Heart right ventricle (tissue), 16 donors: ENCODE measurements at regions of chr7 and their contacts with region 1.

Region 1: DNA sequence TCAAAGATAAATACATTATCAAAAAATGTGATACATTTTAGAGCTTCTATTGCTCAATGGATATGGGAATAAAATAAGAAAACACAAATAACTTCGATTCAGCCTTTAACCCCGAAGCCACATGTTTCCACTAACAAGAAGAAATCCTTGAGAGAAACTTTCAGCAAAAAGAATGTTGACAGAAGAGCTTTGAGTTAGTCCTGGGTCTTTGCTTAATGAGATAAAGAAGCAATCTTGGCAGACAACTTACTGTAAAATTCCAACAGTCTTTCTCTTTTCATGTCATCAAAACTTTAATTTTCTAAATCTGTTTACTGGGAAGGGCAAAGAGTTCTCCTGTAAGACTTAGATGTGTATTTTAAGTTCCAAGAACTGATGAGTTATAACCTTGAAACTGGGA is 810.2 kb downstream of the CNTNAP2 start:
- DNase-seq: no peak
- ATAC-seq: no peak
- H3K4me3 ChIP-seq: no peak overlapping the region
- H3K27ac ChIP-seq: no peak overlapping the region
- H3K4me1 ChIP-seq: no peaks in the 10 kb centered on the region
- H3K27me3 ChIP-seq: no peaks in the 10 kb centered on the region
- CTCF ChIP-seq: no peak

Region 2: DNA sequence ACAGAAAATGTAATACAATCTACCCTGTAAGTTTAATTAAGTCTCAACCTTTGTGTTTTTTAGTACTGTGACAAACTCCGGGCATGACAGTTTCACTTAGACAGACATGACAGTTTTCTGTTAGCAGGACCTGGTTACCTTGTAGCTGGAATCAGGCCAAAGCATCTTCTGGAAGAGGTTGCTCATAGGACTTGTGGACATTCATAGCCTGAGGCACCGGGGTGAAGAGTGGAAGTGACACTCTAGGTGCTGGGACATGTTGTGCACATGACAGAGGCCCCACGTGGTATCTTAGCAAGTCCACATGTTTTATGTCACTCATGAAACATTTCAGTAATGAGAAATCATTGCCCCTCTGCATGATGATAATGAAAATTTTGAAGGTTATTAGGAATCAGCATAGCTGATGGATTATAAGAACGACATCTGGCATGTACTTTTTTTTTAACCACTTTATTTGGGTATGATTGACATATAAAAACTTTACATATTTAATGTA is 368.8 kb before region 1 on chr7:
- intact Hi-C with region 1: no loop called
- DNase-seq: no peak
- ATAC-seq: no peak
- H3K4me3 ChIP-seq: no peak overlapping the region
- H3K27ac ChIP-seq: no peak overlapping the region
- H3K4me1 ChIP-seq: no peaks in the 10 kb centered on the region
- H3K27me3 ChIP-seq: no peaks in the 10 kb centered on the region
- CTCF ChIP-seq: no peak

Region 3: GRCh38 chr7:146982482-146982881 is 55.6 kb after region 1 on chr7:
- intact Hi-C with region 1: loop called in 1 of 10 experiments (anchors 10 kb)
- DNase-seq: no peak
- ATAC-seq: no peak
- H3K4me3 ChIP-seq: no peak overlapping the region
- H3K27ac ChIP-seq: no peak overlapping the region
- H3K4me1 ChIP-seq: no peaks in the 10 kb centered on the region
- H3K27me3 ChIP-seq: no peaks in the 10 kb centered on the region
- CTCF ChIP-seq: no peak

Region 4: GRCh38 chr7:147412782-147413556 is 486.1 kb after region 1 on chr7:
- intact Hi-C with region 1: no loop called
- DNase-seq: no peak
- ATAC-seq: no peak
- H3K4me3 ChIP-seq: no peak overlapping the region
- H3K27ac ChIP-seq: no peak overlapping the region
- H3K4me1 ChIP-seq: no peaks in the 10 kb centered on the region
- H3K27me3 ChIP-seq: no peaks in the 10 kb centered on the region
- CTCF ChIP-seq: no peak